ENCODE measurements at regions of chr1 and their contacts with region 1.

Region 1: GRCh38 chr1:109426278-109427170 is at the start of gene PSMA5:
- DNase-seq: peak; percentile 81
- ATAC-seq: peak; percentile 97
- H3K4me3 Mint-ChIP-seq: peak within 1 kb of the TSS; percentile 96
- H3K27ac Mint-ChIP-seq: peak within 1 kb of the TSS; percentile 97
- H3K4me1 Mint-ChIP-seq: peaks cover 37% of the 10 kb centered on the region
- H3K27me3 Mint-ChIP-seq: no peaks in the 10 kb centered on the region
- CTCF ChIP-seq: no peak
- total RNA-seq, gene PSMA5: 105 and 125 TPM in 2 replicates

Region 2: DNA sequence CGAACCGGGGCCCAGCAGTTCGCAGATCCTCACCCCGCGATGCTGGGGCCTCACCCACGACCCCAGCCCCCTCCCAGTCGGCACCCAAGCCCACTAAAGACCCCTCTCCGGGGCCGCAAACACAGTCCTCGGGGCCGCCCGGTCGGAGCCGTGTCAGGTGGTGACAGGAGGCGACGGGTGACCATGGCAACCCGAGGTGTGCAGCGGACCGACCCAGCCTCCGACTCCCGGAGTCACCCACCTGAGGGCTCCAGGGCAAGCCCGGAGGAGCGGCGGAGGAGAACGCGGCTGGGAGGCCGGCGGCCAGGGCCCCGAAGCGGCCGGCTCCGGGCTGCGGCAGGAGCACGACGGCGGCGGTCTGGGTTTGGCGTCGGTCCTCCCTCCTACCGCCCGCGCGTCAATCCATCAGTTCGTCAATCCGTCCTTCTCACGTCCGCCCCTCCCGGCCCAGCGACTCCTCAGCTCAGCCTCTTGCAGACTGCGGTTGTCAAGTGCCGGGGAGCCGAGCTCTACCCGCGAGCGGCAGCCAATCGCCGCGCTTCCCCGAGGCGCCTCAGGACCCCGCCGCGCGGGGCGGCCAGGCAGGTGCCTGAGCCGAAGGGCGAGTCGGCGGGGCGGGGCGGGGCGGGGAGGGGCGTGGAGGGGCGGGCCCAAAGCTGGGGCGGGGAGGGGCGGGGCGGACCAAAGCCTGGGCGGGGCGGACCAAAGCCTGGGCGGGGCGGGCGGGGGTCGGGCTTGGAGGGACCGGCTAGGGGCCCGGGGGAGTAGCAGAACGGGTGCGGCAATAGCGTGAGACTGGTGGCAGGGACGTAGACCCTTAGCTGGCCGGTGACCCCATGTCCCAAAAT is 384.7 kb before region 1 on chr1 and contains the start of gene WDR47:
- CTCF ChIA-PET with region 1: no interaction called
- POLR2A ChIA-PET with region 1: interaction called, 4 read pairs
- intact Hi-C with region 1: loop called (anchors 1 kb)
- DNase-seq: peak; percentile 89
- ATAC-seq: peak; percentile 96
- H3K4me3 Mint-ChIP-seq: peak within 1 kb of the TSS; percentile 88
- H3K27ac Mint-ChIP-seq: peak within 1 kb of the TSS; percentile 60
- H3K4me1 Mint-ChIP-seq: peaks cover 15% of the 10 kb centered on the region
- H3K27me3 Mint-ChIP-seq: no peaks in the 10 kb centered on the region
- CTCF ChIP-seq: no peak
- total RNA-seq, gene WDR47: 10.3 and 10.9 TPM in 2 replicates

Region 3: DNA sequence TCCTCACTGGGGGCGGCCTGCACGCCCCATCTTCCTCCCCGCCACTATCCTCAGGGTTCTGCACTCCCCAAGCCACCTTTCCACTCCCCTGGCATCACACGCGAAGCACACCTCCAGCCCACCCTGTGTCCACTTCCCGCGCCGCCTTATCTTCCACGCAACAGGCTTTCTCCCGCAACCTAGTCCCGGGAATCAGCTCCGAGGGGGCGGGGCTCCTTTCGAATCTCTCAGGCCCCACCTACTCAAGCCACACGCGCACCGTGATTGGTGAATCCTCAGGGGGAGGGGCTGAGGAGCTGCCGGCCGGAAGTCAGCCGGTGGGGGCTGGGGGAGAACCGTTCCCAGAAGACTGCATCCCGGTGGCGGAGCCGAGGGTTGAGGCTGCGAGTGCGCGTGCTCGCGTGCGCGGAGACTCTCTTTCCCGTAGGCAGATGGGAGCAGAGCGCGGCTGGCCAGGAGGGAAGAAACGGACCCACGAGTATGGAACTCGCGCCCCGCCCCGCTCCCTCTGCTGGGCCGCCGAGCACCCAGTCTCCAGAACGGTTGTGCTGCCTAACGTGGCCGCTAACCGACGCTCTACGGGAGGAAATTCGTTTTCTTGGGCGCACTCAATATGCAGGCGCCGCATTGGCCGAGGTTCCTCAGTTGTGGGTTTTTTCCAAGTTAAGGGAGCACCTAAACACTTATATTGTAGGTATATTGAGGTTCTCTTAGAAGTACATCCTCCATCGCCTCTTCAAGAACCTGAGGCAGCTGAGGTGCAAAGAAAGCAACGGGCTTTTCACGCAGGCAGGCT is 143.4 kb before region 1 on chr1 and contains the start of gene PSRC1:
- CTCF ChIA-PET with region 1: no interaction called
- POLR2A ChIA-PET with region 1: interaction called, 4 read pairs
- intact Hi-C with region 1: loop called (anchors 1 kb)
- DNase-seq: peak; percentile 88
- ATAC-seq: peak; percentile 98
- H3K4me3 Mint-ChIP-seq: peak within 1 kb of the TSS; percentile 96
- H3K27ac Mint-ChIP-seq: peak within 1 kb of the TSS; percentile 91
- H3K4me1 Mint-ChIP-seq: peaks cover 13% of the 10 kb centered on the region
- H3K27me3 Mint-ChIP-seq: peaks cover 3% of the 10 kb centered on the region
- CTCF ChIP-seq: no peak
- total RNA-seq, gene PSRC1: 0.69 TPM in 1 of 2 replicates, not detected in the other

Region 4: DNA sequence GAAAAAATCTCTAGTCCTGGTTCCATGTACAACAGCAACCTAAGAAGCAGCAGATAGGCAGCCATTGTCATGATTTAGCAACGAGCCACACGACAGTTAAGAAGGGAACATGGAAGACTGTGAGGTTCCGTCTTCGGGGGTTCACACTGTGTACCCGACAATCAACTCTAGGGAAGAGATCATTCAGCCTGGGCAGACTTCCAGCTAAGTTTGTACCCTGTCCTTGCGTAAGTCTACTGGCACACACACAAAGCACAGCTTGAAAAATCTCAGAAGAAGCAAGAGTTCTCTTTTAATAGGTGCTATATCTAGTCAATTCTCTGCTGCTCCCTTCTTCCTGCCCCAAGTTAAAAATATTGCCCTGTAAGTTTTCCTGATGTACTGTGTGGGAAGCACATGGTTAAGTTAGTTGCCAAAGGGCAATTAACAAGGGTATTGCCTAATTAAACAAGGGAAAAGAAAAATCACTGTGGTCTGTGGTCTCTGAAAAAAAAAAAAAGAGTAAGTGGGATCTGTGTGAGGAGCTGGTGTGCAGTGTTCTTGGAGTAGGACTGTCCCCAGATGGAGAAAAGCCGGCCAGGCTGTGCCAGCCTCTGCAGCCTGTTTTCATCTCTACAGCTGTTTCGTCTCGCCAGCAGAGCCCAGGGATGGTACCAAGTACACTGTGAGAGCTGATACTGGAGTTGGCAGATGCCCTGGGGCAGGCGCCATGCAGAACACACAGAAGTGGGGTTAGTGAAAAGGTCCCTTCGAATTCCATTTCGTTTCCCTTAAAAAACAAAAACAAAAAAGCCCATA is 113.3 kb before region 1 on chr1:
- CTCF ChIA-PET with region 1: no interaction called
- POLR2A ChIA-PET with region 1: no interaction called
- intact Hi-C with region 1: no loop called
- DNase-seq: no peak
- ATAC-seq: no peak
- H3K4me3 Mint-ChIP-seq: no peak overlapping the region
- H3K27ac Mint-ChIP-seq: no peak overlapping the region
- H3K4me1 Mint-ChIP-seq: peaks cover 2% of the 10 kb centered on the region
- H3K27me3 Mint-ChIP-seq: peaks cover 3% of the 10 kb centered on the region
- CTCF ChIP-seq: no peak

Region 5: GRCh38 chr1:109483672-109484518 is 57.4 kb after region 1 on chr1 and contains the start of gene ATXN7L2:
- CTCF ChIA-PET with region 1: interaction called, 4 read pairs
- POLR2A ChIA-PET with region 1: interaction called, 34 read pairs
- intact Hi-C with region 1: loop called (anchors 1 kb)
- DNase-seq: peak; percentile 90
- ATAC-seq: peak; percentile 79
- H3K4me3 Mint-ChIP-seq: peak within 1 kb of the TSS; percentile 94
- H3K27ac Mint-ChIP-seq: peak within 1 kb of the TSS; percentile 91
- H3K4me1 Mint-ChIP-seq: peaks cover 27% of the 10 kb centered on the region
- H3K27me3 Mint-ChIP-seq: peaks cover 16% of the 10 kb centered on the region
- CTCF ChIP-seq: no peak
- total RNA-seq, gene ATXN7L2: 7.5 and 9.0 TPM in 2 replicates

Region 6: GRCh38 chr1:109532365-109533136 is 106.0 kb after region 1 on chr1:
- CTCF ChIA-PET with region 1: interaction called, 6 read pairs
- POLR2A ChIA-PET with region 1: interaction called, 11 read pairs
- intact Hi-C with region 1: loop called (anchors 1 kb)
- DNase-seq: peak; percentile 82
- ATAC-seq: peak; percentile 93
- H3K4me3 Mint-ChIP-seq: peak overlapping the region; percentile 77
- H3K27ac Mint-ChIP-seq: peak overlapping the region; percentile 74
- H3K4me1 Mint-ChIP-seq: peaks cover 8% of the 10 kb centered on the region
- H3K27me3 Mint-ChIP-seq: no peaks in the 10 kb centered on the region
- CTCF ChIP-seq: no peak

Region 7: DNA sequence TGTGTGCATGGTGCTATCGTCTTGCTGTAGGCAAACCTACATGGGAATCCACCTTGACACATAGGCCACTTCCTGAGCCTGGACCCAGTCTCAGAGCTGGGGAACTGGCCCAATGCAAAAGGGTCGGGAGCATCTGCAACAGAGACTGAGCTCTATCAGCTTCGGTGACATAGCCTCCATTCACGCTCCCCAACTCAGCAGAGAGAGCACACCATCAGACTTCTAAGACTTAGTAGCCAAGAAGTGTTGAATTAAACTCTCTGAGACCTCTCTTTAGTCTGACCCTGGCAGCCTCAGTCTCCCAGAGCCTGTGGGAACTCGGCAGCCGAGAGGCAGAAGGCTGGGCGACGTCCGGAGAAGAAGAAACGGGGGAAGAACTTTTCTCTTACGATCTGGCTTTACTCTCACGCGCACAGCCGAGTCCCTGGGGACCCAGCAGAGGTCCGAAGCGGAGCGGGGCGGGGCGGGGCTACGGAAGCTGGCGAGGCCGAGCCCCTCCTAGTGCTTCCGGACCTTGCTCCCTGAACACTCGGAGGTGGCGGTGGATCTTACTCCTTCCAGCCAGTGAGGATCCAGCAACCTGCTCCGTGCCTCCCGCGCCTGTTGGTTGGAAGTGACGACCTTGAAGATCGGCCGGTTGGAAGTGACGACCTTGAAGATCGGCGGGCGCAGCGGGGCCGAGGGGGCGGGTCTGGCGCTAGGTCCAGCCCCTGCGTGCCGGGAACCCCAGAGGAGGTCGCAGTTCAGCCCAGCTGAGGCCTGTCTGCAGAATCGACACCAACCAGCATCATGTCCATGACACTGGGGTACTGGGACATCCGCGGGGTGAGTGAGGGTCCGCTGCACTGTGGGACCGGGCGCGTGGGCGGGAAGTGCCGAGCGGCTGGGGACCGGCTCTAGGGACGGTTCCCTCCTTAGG is 229.3 kb after region 1 on chr1 and contains the start of gene GSTM4:
- CTCF ChIA-PET with region 1: no interaction called
- POLR2A ChIA-PET with region 1: interaction called, 4 read pairs
- intact Hi-C with region 1: loop called (anchors 1 kb)
- DNase-seq: peak; percentile 82
- ATAC-seq: peak; percentile 97
- H3K4me3 Mint-ChIP-seq: peak within 1 kb of the TSS; percentile 96
- H3K27ac Mint-ChIP-seq: peak within 1 kb of the TSS; percentile 94
- H3K4me1 Mint-ChIP-seq: peaks cover 24% of the 10 kb centered on the region
- H3K27me3 Mint-ChIP-seq: peaks cover 10% of the 10 kb centered on the region
- CTCF ChIP-seq: no peak
- total RNA-seq, gene GSTM4: 13.1 and 13.7 TPM in 2 replicates